Naive thymus-derived CD4-positive, alpha-beta T cell (primary cell): ENCODE measurements at regions of chr13 and their contacts with region 1.

Region 1: GRCh38 chr13:48094781-48095502 is at the start of gene MED4:
- DNase-seq: peak; percentile 94 to 99 (median 98)
- ATAC-seq: peak; percentile 100
- H3K4me3 ChIP-seq: peak within 1 kb of the TSS; percentile 90
- H3K4me3 Mint-ChIP-seq: peak within 1 kb of the TSS; percentile 94 to 99 (median 96)
- H3K27ac ChIP-seq: peak within 1 kb of the TSS; percentile 99
- H3K27ac Mint-ChIP-seq: peak within 1 kb of the TSS; percentile 92 to 98 (median 96)
- H3K4me1 ChIP-seq: peaks cover 13 to 26% of the 10 kb centered on the region in 2 donors
- H3K4me1 Mint-ChIP-seq: peaks cover 26 to 56% (median 48%) of the 10 kb centered on the region in 7 donors
- H3K27me3 ChIP-seq: no peaks in the 10 kb centered on the region
- H3K27me3 Mint-ChIP-seq: peaks cover 0 to 9% (median 0%) of the 10 kb centered on the region in 5 donors
- total RNA-seq, gene MED4: 43.4 to 60.9 (median 50.0) TPM

Region 2: GRCh38 chr13:47794963-47795362 is 300.0 kb before region 1 on chr13:
- CTCF ChIA-PET with region 1: no interaction called
- POLR2A ChIA-PET with region 1: no interaction called
- intact Hi-C with region 1: loop called in 1 of 2 experiments (anchors 1 kb)
- DNase-seq: no peak
- ATAC-seq: no peak
- H3K4me3 ChIP-seq: no peak overlapping the region
- H3K4me3 Mint-ChIP-seq: no peak overlapping the region
- H3K27ac ChIP-seq: no peak overlapping the region
- H3K27ac Mint-ChIP-seq: no peak overlapping the region
- H3K4me1 ChIP-seq: no peaks in the 10 kb centered on the region
- H3K4me1 Mint-ChIP-seq: no peaks in the 10 kb centered on the region
- H3K27me3 ChIP-seq: no peaks in the 10 kb centered on the region
- H3K27me3 Mint-ChIP-seq: peaks cover 0 to 6% (median 3%) of the 10 kb centered on the region in 5 donors

Region 3: GRCh38 chr13:48037346-48038173 is 57.4 kb before region 1 on chr13 and contains the start of gene NUDT15:
- CTCF ChIA-PET with region 1: interaction called, 13 read pairs
- POLR2A ChIA-PET with region 1: interaction called, 14 read pairs
- intact Hi-C with region 1: loop called (anchors 1 kb)
- DNase-seq: peak; percentile 93 to 98 (median 97)
- ATAC-seq: peak; percentile 96
- H3K4me3 ChIP-seq: peak within 1 kb of the TSS; percentile 90
- H3K4me3 Mint-ChIP-seq: peak within 1 kb of the TSS; percentile 82 to 98 (median 95)
- H3K27ac ChIP-seq: peak within 1 kb of the TSS; percentile 91
- H3K27ac Mint-ChIP-seq: peak within 1 kb of the TSS; percentile 96 to 100 (median 97)
- H3K4me1 ChIP-seq: peaks cover 14 to 15% of the 10 kb centered on the region in 2 donors
- H3K4me1 Mint-ChIP-seq: peaks cover 15 to 52% (median 40%) of the 10 kb centered on the region in 7 donors
- H3K27me3 ChIP-seq: no peaks in the 10 kb centered on the region
- H3K27me3 Mint-ChIP-seq: no peaks in the 10 kb centered on the region
- total RNA-seq, gene NUDT15: 4.3 to 13.6 (median 8.7) TPM

Region 4: DNA sequence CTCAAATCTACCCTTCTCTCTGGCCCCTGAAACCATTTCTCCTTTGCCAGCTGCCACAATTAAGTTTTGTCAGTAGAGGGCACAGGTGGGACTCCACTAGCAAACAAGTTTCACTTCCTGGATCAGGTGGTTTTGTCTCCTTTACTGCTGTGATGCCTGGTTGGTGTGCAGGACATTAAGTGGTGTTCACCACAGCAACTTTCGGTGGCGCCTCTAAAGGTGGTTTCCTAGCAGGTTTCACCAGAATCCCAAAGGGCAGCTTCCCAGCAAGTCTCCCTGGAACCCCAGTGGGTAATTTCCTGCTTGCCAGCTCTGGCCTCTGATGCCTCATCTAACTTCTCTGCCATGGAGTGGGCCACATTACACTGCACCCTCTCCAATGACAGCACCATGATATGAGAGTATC is 16.7 kb before region 1 on chr13:
- CTCF ChIA-PET with region 1: interaction called, 7 read pairs
- POLR2A ChIA-PET with region 1: interaction called, 7 read pairs
- intact Hi-C with region 1: loop called in 1 of 2 experiments (anchors 1 kb)
- DNase-seq: peak in 5 of 9 donors; percentile 3 to 34 (median 6)
- ATAC-seq: peak; percentile 73
- H3K4me3 ChIP-seq: no peak overlapping the region
- H3K4me3 Mint-ChIP-seq: no peak overlapping the region
- H3K27ac ChIP-seq: no peak overlapping the region
- H3K27ac Mint-ChIP-seq: peak overlapping the region in 3 of 9 donors; percentile 20 to 60 (median 28)
- H3K4me1 ChIP-seq: no peaks in the 10 kb centered on the region
- H3K4me1 Mint-ChIP-seq: peaks cover 0 to 11% (median 0%) of the 10 kb centered on the region in 7 donors
- H3K27me3 ChIP-seq: no peaks in the 10 kb centered on the region
- H3K27me3 Mint-ChIP-seq: no peaks in the 10 kb centered on the region

Region 5: GRCh38 chr13:48110931-48111721 is 16.2 kb after region 1 on chr13:
- CTCF ChIA-PET with region 1: no interaction called
- POLR2A ChIA-PET with region 1: no interaction called
- intact Hi-C with region 1: no loop called
- DNase-seq: no peak
- ATAC-seq: no peak
- H3K4me3 ChIP-seq: no peak overlapping the region
- H3K4me3 Mint-ChIP-seq: no peak overlapping the region
- H3K27ac ChIP-seq: no peak overlapping the region
- H3K27ac Mint-ChIP-seq: no peak overlapping the region
- H3K4me1 ChIP-seq: no peaks in the 10 kb centered on the region
- H3K4me1 Mint-ChIP-seq: peaks cover 0 to 3% (median 0%) of the 10 kb centered on the region in 7 donors
- H3K27me3 ChIP-seq: no peaks in the 10 kb centered on the region
- H3K27me3 Mint-ChIP-seq: peaks cover 0 to 26% (median 10%) of the 10 kb centered on the region in 5 donors

Region 6: GRCh38 chr13:49185264-49185663 is 1090.3 kb after region 1 on chr13:
- CTCF ChIA-PET with region 1: no interaction called
- POLR2A ChIA-PET with region 1: no interaction called
- intact Hi-C with region 1: no loop called
- DNase-seq: no peak
- ATAC-seq: no peak
- H3K4me3 ChIP-seq: no peak overlapping the region
- H3K4me3 Mint-ChIP-seq: no peak overlapping the region
- H3K27ac ChIP-seq: no peak overlapping the region
- H3K27ac Mint-ChIP-seq: peak overlapping the region in 3 of 9 donors; percentile 25 to 76 (median 56)
- H3K4me1 ChIP-seq: no peaks in the 10 kb centered on the region
- H3K4me1 Mint-ChIP-seq: peaks cover 0 to 16% (median 0%) of the 10 kb centered on the region in 7 donors
- H3K27me3 ChIP-seq: no peaks in the 10 kb centered on the region
- H3K27me3 Mint-ChIP-seq: no peaks in the 10 kb centered on the region